Cardiac septum (tissue), 1 donor: ENCODE measurements at regions of chr15 and their contacts with region 1.

Region 1: DNA sequence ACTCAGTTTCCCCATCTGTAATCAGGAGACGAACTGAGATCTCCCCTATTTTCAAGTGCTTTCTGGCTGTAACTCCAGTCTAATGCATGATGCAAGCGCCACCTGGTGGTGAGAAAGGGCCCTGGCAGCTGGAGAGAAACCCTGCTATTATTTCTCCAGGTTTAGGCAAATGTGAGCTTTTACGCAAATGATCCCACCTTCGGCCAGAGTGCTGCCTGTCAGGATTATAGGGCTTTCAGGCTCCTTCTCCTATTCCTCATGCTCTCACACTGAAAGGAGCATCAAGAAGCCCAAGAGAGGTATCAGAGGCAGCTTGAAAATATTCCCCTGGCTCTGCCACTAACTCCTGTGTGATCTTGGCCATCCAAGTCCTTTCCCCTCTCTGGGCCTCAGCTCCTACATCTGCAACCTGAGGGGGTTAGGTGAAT is 93.9 kb upstream of the RASGRF1 start:
- DNase-seq: peak; percentile 71

Region 2: GRCh38 chr15:78790030-78790429 is 394.4 kb before region 1 on chr15:
- intact Hi-C with region 1: no loop called
- DNase-seq: no peak

Region 3: GRCh38 chr15:78909791-78910228 is 274.7 kb before region 1 on chr15:
- intact Hi-C with region 1: loop called (anchors 2 kb)
- DNase-seq: no peak

Region 4: DNA sequence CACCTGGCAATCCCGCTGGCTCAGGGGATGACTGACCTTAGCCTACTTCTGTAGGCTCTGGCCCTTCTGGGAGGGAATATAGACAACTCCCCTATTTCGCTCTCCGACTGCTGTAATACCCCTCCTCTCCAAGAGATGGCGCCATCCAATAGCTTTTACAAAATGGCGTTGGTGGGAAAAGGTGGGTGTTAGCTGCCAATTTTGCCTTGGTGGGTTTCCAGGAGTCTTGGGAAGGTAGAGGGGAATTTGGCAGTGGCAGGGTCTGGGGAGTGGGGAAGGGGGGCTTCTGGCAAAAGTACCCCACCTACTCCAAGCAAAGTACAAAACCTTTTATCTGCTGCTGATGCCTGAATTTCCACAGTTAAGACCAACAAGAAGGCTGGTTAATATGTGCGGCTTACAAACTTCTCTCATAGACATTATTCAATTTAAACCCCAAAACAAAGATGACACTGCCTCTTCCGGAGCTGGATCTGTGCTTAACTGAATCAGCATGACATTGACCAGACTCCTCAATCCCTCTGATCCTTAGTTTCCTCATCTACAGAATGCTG is 156.0 kb before region 1 on chr15:
- intact Hi-C with region 1: loop called (anchors 1 kb)
- DNase-seq: no peak